Posterior cingulate gyrus (tissue), 11 donors: ENCODE measurements at regions of chr1 and their contacts with region 1.

Region 1: GRCh38 chr1:10507111-10507879 is 32.5 kb downstream of the PEX14 start:
- DNase-seq: peak; percentile 37 to 94 (median 57)

Region 2: GRCh38 chr1:10401305-10401680 is 106.0 kb before region 1 on chr1:
- intact Hi-C with region 1: no loop called
- DNase-seq: no peak

Region 3: DNA sequence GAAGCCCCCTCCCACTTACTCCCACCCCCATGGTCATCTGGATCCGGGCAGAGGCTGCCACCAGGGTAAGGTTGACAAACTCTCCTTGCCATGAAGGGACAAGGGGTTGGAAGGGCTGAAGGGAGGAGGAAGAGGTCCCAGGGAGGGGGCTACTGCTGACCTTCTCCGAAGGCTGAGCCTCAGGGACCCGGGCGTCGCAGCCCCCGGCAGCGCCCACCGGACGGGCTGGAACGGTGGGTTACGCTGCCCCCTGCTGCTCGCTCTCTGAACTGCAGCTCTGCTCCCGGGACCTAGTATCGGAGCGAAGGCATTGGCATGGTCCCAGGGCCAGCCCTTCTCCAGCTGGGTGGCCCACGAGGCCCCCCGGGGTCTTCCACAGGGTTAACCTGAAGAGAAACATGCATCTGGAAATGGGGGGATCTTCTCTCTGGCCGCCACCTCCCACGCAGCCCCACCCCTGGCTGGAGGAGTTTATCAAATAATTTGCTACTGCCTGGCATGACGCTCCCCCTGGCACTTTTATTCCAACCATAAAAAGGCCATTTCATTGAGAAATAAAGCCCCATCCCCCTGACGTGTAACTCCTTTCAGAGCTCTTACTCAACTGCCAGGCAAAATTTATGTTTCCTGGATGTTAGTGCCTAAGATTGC is 434.7 kb after region 1 on chr1:
- intact Hi-C with region 1: loop called (anchors 5 kb)
- DNase-seq: peak in 7 of 10 donors; percentile 45 to 91 (median 62)